CD4-positive, alpha-beta T cell (primary cell): ENCODE measurements at regions of chr11 and their contacts with region 1.

Region 1: DNA sequence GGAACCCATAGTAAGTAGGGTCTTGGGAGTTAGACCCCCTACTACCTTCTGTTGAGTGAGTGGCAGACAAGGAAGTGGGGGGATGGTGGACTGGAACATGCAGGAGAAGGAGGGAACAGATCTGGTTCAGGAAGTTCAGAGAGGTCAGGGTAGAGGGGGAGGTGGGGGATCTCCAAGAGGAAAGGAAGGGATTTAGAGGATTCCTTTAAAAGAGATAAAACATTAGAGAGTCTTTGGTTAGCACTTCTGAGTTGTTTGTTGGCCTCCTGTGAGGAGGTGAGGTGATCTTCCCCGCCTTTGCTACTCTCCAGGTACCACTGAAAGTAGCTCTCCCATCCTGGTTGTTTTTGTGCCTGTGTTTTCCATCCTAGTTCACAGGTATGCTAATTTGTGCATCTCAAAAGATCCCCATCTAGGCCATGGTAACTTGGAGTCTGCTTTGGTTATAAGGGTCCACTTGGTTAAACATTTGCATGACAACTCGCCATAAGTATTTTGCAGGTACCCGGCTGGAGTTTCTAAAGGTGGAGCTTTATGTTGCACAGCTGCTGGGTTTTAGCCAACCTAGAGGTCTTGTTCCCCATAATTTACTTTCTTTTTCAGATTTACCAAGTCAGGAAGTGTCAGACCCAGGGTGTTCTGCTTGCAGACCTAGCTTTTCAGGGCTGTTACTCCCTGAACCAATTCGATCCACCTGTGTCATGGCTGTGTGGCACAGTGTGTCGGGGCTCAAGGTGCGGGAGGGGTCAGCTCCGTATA is 79.3 kb upstream of the SORL1 start:
- DNase-seq: peak in 4 of 14 experiments; percentile 31 to 38 (median 34)
- ATAC-seq: no peak
- H3K4me3 ChIP-seq: peak overlapping the region; percentile 3
- H3K4me3 Mint-ChIP-seq: peak overlapping the region; percentile 25
- H3K27ac ChIP-seq: peak overlapping the region in 1 of 2 donors; percentile 41
- H3K27ac Mint-ChIP-seq: peak overlapping the region; percentile 65
- H3K4me1 ChIP-seq: peaks cover 45% of the 10 kb centered on the region
- H3K4me1 Mint-ChIP-seq: peaks cover 77% of the 10 kb centered on the region
- H3K27me3 ChIP-seq: no peaks in the 10 kb centered on the region
- H3K27me3 Mint-ChIP-seq: no peaks in the 10 kb centered on the region
- CTCF ChIP-seq: no peak

Region 2: DNA sequence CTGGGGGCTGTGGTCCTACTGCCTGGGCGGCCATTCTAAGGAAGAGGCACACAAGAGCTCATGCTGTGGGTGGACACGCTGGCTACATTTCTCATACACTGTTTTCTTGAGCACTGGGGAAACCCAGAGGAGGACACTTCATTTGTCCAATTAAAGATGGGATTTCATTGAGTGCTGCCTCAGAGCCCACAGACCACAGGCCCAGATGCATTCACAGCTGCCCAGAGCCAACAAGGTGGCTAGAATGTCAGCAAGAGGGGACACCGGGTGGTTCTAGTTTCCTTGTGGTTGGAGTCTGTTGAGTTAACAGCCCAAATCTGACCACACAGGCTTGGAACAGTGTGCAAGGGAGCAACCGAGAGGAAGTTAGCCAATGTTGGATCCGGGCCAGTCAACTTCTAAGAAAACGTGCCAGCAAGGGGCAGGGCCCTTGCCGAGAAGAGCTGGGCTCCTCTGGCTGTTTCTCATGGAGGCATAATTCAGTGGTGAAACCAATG is 44.3 kb after region 1 on chr11:
- CTCF ChIA-PET with region 1: no interaction called
- POLR2A ChIA-PET with region 1: interaction called, 6 read pairs
- intact Hi-C with region 1: loop called in 1 of 2 experiments (anchors 2 kb)
- DNase-seq: peak; percentile 1 to 80 (median 40)
- ATAC-seq: peak; percentile 25
- H3K4me3 ChIP-seq: no peak overlapping the region
- H3K4me3 Mint-ChIP-seq: peak overlapping the region; percentile 9
- H3K27ac ChIP-seq: peak overlapping the region; percentile 47 to 81
- H3K27ac Mint-ChIP-seq: peak overlapping the region; percentile 96
- H3K4me1 ChIP-seq: peaks cover 59% of the 10 kb centered on the region
- H3K4me1 Mint-ChIP-seq: peaks cover 75% of the 10 kb centered on the region
- H3K27me3 ChIP-seq: no peaks in the 10 kb centered on the region
- H3K27me3 Mint-ChIP-seq: no peaks in the 10 kb centered on the region
- CTCF ChIP-seq: no peak